AG04450 (cell line): ENCODE measurements at regions of chr5 and their contacts with region 1.

Region 1: GRCh38 chr5:172407822-172408221 is 46.5 kb downstream of the SH3PXD2B start:
- DNase-seq: no peak
- H3K4me3 ChIP-seq: no peak overlapping the region
- H3K27ac ChIP-seq: peak overlapping the region; percentile 55
- H3K27me3 ChIP-seq: no peaks in the 10 kb centered on the region
- CTCF ChIP-seq: no peak

Region 2: DNA sequence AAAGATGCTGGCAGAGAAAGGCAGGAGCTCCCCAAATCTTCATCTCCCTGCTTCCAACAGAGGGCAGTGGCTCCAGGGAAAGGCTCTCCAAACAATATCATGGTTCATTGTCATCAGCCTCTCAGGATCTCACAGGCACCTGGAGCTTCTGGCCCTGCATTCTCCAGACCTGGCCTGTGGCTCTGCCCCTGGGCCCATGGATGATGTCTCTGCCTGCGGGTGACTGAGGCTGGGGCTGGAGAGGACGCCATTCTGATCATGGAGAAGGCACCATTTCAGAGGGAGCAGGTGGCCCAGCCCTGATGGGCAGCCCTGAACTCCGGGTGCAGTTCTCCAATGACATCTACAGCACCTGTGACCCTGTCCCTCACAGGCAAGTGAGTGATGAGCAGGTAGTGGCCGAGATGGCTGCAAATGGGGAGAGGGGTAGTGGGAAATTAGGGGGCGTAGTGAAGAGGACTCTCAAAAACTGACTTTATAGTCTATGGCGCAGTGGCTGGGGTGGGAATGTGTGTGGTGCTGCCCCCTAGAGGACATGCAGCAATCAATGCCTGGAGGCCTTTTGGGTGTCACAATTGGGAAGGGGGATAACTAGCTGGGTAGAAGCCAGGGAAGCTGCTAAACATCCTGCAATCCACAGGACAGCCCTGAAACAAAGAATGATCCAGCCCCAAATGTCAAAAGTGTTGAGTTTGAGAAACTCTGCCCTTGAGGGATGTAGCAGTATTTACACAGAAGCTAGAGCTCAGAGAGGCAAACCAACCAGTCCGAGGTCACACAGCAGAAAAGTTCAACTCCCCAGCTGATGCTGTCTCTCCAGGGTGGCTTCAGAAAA is 43.3 kb after region 1 on chr5:
- CTCF ChIA-PET with region 1: interaction called, 12 read pairs
- POLR2A ChIA-PET with region 1: interaction called, 7 read pairs
- DNase-seq: no peak
- H3K4me3 ChIP-seq: peak overlapping the region; percentile 21
- H3K27ac ChIP-seq: no peak overlapping the region
- H3K27me3 ChIP-seq: no peaks in the 10 kb centered on the region
- CTCF ChIP-seq: peak; percentile 77